ENCODE measurements at regions of chr20 and their contacts with region 1.

Region 1: DNA sequence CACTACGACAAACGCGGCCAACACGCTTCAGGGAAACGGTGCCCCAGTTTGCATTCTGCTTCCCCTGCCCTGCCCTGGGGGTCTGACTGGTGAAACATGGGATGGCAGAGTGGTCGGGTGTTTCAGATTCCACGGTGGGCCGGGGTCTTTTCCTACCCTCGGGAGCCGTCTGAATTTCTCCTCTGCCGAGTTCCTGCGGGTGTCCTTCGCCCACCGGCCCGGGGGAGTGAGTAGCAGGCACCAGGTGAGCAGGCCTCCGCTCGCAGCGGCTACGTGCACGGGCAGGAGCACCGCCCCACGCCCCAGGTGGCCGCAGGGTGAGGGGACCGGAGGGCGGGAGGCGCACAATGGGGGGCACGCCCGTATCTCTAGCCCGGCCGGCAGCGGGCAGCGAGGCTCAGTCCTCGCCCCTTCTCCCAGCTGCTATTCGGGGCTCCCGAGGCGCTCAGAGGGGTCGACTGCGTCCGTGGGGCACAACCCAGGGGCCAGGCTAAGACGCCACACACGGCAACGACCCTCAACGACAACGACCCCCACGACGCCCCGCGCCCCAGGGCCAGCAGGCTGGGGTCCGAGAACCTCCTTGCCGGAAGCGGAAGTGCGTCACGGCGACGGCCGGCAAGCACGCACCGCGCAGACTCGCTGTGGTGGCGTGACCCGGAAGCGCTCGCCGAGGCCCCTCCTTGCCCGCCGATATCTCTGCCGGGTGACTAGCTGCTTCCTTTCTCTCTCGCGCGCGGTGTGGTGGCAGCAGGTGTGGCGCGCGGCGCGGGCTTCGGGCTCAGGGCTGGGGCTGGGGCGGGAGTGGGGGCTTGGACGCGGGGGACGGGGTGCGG is at the start of gene RPS21:
- DNase-seq: peak; percentile 97
- ATAC-seq: peak; percentile 91
- H3K4me3 Mint-ChIP-seq: peak within 1 kb of the TSS; percentile 93
- H3K27ac Mint-ChIP-seq: peak within 1 kb of the TSS; percentile 94
- H3K4me1 Mint-ChIP-seq: peaks cover 42% of the 10 kb centered on the region
- H3K27me3 Mint-ChIP-seq: no peaks in the 10 kb centered on the region
- total RNA-seq, gene RPS21: 1,051 to 2,439 TPM

Region 2: DNA sequence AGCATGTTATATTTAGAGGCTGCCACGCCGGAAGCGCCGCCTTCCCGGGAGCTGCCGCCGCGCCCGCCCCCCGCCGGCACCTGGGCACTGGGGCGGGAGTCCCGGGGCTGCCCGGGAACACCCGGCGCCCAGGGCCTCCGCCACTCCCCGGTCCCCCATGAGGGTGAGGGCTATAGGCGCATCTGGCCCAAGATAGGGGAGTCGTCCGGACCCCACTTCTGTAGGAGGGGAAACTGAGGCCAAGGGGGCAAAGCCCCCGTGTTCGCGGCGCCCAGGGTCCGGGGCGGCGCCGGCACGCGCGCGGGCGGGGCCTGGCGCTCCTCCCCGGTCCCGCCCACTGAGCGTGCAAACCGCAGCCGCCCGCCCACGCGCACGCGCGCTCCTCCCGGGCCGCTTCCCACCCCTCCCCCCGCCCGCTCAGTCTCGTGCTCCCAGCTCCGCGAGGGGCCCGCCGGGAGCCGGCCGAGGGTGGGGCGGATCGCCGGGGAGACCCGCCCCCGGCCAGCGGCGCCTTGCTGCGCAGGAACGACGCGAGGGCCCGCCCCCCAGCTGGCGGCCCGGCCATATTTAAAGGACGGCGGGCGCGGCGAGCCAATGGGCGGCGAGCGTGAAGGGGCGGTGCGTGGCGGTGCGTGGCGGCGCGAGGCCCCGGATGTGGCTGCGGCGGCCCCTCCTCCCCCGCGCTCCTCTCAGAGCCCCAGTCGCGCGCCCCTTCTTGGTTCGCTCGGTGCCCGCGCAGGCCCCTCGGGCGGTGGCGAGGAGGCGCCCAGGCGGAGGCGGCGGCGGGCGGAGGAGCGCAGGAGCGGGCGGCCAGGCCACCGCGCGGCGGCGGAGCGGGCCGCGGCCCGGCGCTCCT is 264.6 kb before region 1 on chr20 and contains the start of gene LSM14B:
- CTCF ChIA-PET with region 1: no interaction called
- POLR2A ChIA-PET with region 1: no interaction called
- intact Hi-C with region 1: loop called in 1 of 2 experiments (anchors 1 kb)
- DNase-seq: peak; percentile 99
- ATAC-seq: peak; percentile 84
- H3K4me3 Mint-ChIP-seq: peak within 1 kb of the TSS; percentile 80
- H3K27ac Mint-ChIP-seq: peak within 1 kb of the TSS; percentile 91
- H3K4me1 Mint-ChIP-seq: peaks cover 54% of the 10 kb centered on the region
- H3K27me3 Mint-ChIP-seq: no peaks in the 10 kb centered on the region
- total RNA-seq, gene LSM14B: 38.7 TPM

Region 3: GRCh38 chr20:62237801-62238571 is 148.6 kb before region 1 on chr20 and contains the start of gene OSBPL2:
- CTCF ChIA-PET with region 1: no interaction called
- POLR2A ChIA-PET with region 1: no interaction called
- intact Hi-C with region 1: loop called (anchors 1 kb)
- DNase-seq: peak; percentile 100
- ATAC-seq: peak; percentile 99
- H3K4me3 Mint-ChIP-seq: peak within 1 kb of the TSS; percentile 77
- H3K27ac Mint-ChIP-seq: peak within 1 kb of the TSS; percentile 74
- H3K4me1 Mint-ChIP-seq: peaks cover 34% of the 10 kb centered on the region
- H3K27me3 Mint-ChIP-seq: no peaks in the 10 kb centered on the region
- total RNA-seq, gene OSBPL2: 19.2 to 23.0 TPM

Region 4: GRCh38 chr20:62500237-62500864 is 113.8 kb after region 1 on chr20:
- CTCF ChIA-PET with region 1: no interaction called
- POLR2A ChIA-PET with region 1: no interaction called
- intact Hi-C with region 1: loop called in 1 of 2 experiments (anchors 1 kb)
- DNase-seq: peak; percentile 91
- ATAC-seq: peak; percentile 14
- H3K4me3 Mint-ChIP-seq: no peak overlapping the region
- H3K27ac Mint-ChIP-seq: peak overlapping the region; percentile 82
- H3K4me1 Mint-ChIP-seq: peaks cover 32% of the 10 kb centered on the region
- H3K27me3 Mint-ChIP-seq: peaks cover 1% of the 10 kb centered on the region

Region 5: DNA sequence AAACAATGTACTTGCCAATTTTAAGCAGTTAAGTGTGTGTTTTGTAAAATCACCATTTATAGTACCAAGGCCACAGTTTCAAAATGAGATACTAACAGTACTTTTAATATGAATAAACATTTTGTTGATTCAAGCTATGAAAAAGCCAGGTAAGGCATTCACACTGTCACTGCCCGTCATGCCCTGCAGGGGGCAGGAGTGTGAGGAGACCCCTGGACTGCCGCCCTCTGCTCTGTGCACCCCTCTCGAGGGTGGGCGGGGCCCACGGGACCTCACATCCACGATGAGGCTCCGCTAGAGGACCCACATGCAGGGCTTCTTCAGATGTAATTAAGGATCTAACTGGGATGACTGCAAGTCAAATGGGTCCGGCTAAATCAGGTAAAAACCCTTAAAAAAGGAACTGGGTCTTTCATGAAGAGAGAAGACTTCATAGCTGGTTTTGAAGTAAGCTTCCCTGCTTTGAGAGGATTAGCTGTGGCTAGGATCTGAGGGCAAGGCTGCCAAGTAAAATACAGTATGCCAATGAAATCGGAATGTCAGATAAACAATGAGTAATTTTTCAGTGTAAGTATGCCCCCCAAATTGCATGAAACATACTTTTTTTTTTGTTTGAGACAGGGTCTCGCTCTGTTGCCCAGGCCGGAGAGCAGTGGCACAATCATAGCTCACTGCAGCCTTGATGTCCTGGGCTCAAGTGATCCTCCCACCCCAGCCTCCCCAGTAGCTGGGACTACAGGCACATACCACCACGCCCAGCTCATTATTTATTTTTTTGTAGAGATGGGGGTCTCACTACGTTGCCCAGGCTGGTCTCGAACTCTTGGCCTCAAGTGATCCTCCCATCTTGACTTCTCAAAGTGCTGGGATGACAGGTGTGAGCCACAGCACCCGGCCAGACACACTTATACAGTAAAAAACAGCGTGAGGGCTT is 521.0 kb after region 1 on chr20:
- CTCF ChIA-PET with region 1: no interaction called
- POLR2A ChIA-PET with region 1: no interaction called
- intact Hi-C with region 1: no loop called
- DNase-seq: peak; percentile 62
- ATAC-seq: peak; percentile 76
- H3K4me3 Mint-ChIP-seq: no peak overlapping the region
- H3K27ac Mint-ChIP-seq: peak overlapping the region; percentile 58
- H3K4me1 Mint-ChIP-seq: peaks cover 11% of the 10 kb centered on the region
- H3K27me3 Mint-ChIP-seq: no peaks in the 10 kb centered on the region

Region 6: DNA sequence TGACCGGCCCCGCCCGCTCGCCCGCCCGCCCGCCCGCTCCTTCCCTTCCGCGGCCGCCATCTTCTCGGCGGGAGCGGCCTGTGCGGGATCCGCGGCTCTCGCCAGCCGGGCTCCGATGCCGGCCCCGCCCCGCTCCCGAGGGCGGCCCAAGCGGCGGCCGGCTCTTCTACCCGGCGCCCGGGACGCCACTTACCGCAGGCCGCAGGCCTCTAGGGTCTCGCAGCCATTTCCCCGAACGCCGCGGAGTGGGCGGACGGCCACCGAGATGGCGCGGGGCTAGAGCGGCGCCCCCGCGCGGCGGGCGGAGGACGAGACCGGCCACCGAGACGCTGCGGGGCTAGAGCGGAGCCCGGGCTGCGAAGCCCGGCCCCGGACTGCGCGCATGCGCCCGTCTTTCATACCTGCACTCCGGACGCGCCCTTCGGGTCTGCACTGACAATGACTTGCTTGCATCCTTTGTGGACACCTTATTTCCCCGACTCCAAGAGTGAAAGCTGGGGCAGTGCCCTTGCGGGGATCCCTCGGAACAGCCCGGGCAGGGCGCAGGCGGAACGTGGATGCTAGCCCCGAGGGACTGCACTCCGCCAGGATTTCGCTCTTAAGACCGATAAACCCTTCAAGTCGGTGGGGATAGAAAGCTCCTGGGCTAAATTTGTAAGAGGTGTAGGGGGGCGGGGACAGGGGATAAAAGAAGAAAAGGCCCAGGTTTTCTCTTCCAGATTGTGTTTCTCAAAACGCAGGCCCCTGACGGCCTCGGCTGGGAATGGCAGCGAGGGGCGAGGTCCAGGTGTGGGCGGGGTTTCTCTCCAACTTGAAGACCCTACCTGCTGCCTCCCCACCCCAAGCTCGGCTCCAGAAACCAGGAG is 539.9 kb after region 1 on chr20 and contains the start of gene DIDO1:
- CTCF ChIA-PET with region 1: no interaction called
- POLR2A ChIA-PET with region 1: no interaction called
- intact Hi-C with region 1: loop called in 1 of 2 experiments (anchors 5 kb)
- DNase-seq: peak; percentile 94
- ATAC-seq: peak; percentile 78
- H3K4me3 Mint-ChIP-seq: peak within 1 kb of the TSS; percentile 94
- H3K27ac Mint-ChIP-seq: peak within 1 kb of the TSS; percentile 96
- H3K4me1 Mint-ChIP-seq: peaks cover 64% of the 10 kb centered on the region
- H3K27me3 Mint-ChIP-seq: no peaks in the 10 kb centered on the region
- total RNA-seq, gene DIDO1: 43.7 to 49.7 TPM

Measured in activated CD4-positive, alpha-beta T cell treated with anti-CD3 and anti-CD28 coated beads for 36 hours (primary cell).